PC-9 (cell line): ENCODE measurements at regions of chr17 and their contacts with region 1.

Region 1: DNA sequence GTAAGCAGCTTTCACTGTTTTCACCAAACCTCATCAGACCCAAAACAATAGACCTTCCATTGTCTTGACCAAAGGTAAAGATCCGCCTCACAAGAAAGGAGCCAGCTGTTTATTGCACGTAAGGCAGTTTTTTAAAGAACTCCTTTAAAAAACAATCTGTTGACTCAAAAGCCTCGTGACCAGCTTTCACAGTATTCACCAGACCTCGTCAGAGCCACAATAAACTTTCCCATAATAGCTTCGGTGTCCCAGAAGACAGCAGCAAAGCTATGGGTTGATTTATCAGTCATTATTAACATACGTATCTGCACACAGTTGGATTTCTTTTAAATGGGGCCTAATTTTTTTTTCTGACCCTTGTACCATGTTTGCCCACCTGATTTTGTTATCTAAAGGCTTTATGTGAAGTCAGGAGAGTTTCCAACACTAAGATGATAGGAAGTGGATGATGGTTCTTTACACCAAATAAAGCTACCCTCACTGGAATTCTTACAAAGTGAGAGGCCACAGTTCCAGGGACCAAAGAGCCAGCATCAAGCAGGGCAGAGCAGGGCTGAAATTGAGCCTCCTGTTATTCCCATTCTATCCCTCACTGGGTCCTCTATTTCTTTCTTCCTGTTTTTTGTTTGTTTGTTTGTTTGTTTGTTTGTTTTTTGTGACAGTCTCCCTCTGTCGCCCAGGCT is 17.6 kb upstream of the HELZ start:
- DNase-seq: no peak
- H3K4me3 ChIP-seq: no peak overlapping the region
- H3K27ac ChIP-seq: no peak overlapping the region
- H3K4me1 ChIP-seq: peaks cover 12% of the 10 kb centered on the region
- H3K27me3 ChIP-seq: no peaks in the 10 kb centered on the region
- CTCF ChIP-seq: no peak

Region 2: GRCh38 chr17:67245073-67245755 is 17.4 kb before region 1 on chr17 and contains the start of gene HELZ:
- CTCF ChIA-PET with region 1: no interaction called
- POLR2A ChIA-PET with region 1: interaction called, 12 read pairs
- intact Hi-C with region 1: no loop called
- DNase-seq: peak; percentile 74 to 77
- H3K4me3 ChIP-seq: peak within 1 kb of the TSS; percentile 99
- H3K27ac ChIP-seq: peak within 1 kb of the TSS; percentile 65
- H3K4me1 ChIP-seq: peaks cover 27% of the 10 kb centered on the region
- H3K27me3 ChIP-seq: no peaks in the 10 kb centered on the region
- CTCF ChIP-seq: no peak
- total RNA-seq, gene HELZ: 35.1 and 38.0 TPM in 2 replicates

Region 3: DNA sequence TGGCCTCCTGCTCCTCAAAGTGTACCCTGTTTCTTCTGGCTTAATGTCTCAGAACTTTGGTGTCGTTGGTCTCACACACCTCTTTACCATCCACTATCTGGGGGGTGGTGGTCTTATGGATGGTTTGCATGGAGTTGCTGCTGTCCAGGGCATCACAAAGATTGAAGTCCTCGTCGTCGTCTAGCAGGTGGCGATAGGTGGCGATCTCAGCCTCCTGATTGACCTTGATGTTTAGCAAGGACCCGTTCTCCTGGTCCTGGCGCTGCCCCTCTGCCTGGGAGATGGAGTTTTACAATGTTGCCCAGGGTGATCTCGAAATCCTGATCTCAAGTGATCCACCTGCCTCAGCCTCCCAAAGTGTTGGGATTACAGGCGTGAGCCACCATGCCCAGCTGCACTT is 13.5 kb after region 1 on chr17:
- CTCF ChIA-PET with region 1: no interaction called
- POLR2A ChIA-PET with region 1: no interaction called
- intact Hi-C with region 1: no loop called
- DNase-seq: peak in 1 of 2 experiments; percentile 39
- H3K4me3 ChIP-seq: no peak overlapping the region
- H3K27ac ChIP-seq: no peak overlapping the region
- H3K4me1 ChIP-seq: 0 out of 2 replicates have a peak, but pooled peaks cover 2% of the 10 kb centered on the region
- H3K27me3 ChIP-seq: no peaks in the 10 kb centered on the region
- CTCF ChIP-seq: peak; percentile 69